Activated naive CD4-positive, alpha-beta T cell treated with anti-CD3 and anti-CD28 coated beads for 36 hours (primary cell): ENCODE measurements at regions of chr17 and their contacts with region 1.

Region 1: DNA sequence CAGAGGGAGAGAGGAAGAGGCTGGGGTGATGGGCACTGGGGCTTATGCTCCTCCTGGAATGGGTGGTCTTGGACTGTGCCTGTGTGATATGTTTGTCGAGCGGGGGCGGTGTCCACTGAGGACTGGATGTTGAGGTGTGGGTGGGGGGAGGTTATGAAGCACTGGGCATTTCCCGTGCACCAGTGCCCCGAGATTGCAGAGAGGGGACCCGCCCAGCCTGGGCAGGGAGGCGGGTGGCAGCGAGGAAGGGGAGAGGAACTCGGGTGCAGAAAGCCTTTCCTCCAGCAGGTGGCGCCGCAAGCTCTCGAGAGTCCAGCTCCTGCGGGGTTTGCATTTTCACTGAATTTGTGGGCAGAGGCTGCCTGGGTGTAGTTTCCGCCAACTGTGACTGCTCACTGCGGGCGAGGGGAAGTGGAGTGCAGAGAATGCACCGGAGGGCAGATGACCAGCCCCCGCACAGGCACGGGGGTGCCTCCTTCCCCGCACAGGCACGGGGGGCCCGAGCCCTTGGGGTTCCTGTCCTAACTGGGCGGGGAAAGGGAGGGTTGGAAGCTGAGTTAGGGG is 190.6 kb downstream of the SEC14L1 start:
- DNase-seq: peak; percentile 98
- H3K4me3 Mint-ChIP-seq: peak overlapping the region; percentile 70
- H3K27ac Mint-ChIP-seq: no peak overlapping the region
- H3K4me1 Mint-ChIP-seq: peaks cover 37% of the 10 kb centered on the region
- H3K27me3 Mint-ChIP-seq: no peaks in the 10 kb centered on the region

Region 2: GRCh38 chr17:76997981-76998531 is 333.3 kb before region 1 on chr17:
- CTCF ChIA-PET with region 1: no interaction called
- intact Hi-C with region 1: no loop called
- DNase-seq: peak; percentile 85
- H3K4me3 Mint-ChIP-seq: peak overlapping the region; percentile 45
- H3K27ac Mint-ChIP-seq: peak overlapping the region; percentile 78
- H3K4me1 Mint-ChIP-seq: peaks cover 55% of the 10 kb centered on the region
- H3K27me3 Mint-ChIP-seq: no peaks in the 10 kb centered on the region

Region 3: GRCh38 chr17:77345260-77345910 is 14.0 kb after region 1 on chr17:
- CTCF ChIA-PET with region 1: interaction called, 12 read pairs
- intact Hi-C with region 1: loop called (anchors 1 kb)
- DNase-seq: no peak
- H3K4me3 Mint-ChIP-seq: no peak overlapping the region
- H3K27ac Mint-ChIP-seq: no peak overlapping the region
- H3K4me1 Mint-ChIP-seq: peaks cover 41% of the 10 kb centered on the region
- H3K27me3 Mint-ChIP-seq: no peaks in the 10 kb centered on the region

Region 4: DNA sequence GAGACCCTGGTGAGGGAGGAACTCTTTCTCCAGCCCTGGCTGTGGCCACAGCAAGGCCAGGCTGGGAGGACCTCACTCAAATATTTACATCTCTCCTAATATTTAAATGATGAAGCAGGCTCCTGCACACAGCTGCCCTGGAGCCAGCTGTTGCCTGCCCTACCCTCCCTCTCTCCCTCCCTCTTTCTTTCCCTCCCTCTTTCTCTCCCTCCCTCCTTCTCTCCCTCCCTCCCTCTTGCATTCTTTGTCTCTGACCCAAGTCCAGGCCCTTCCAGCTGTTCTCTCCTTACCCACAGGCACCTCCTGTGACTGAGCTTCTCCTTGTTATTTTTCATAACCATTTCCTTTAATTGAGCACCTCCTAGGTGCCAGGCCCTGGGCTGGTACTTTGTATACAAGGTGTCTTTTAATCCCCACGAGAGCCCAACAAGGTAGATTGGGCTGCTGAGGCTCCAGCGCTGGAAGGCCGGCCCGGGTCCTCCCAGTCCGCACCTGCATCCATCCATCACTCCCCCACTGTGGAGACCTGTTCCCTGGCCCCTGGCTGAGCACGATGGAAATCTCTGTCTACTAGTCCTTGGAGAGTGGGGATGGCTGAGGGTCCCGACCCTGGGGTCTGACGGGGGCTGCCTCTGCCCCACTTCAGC is 51.7 kb after region 1 on chr17:
- CTCF ChIA-PET with region 1: interaction called, 6 read pairs
- intact Hi-C with region 1: loop called (anchors 2 kb)
- DNase-seq: no peak
- H3K4me3 Mint-ChIP-seq: no peak overlapping the region
- H3K27ac Mint-ChIP-seq: no peak overlapping the region
- H3K4me1 Mint-ChIP-seq: peaks cover 76% of the 10 kb centered on the region
- H3K27me3 Mint-ChIP-seq: no peaks in the 10 kb centered on the region

Region 5: GRCh38 chr17:77420804-77421629 is 89.6 kb after region 1 on chr17:
- CTCF ChIA-PET with region 1: interaction called, 10 read pairs
- intact Hi-C with region 1: no loop called
- DNase-seq: peak; percentile 75
- H3K4me3 Mint-ChIP-seq: peak overlapping the region; percentile 66
- H3K27ac Mint-ChIP-seq: peak overlapping the region; percentile 86
- H3K4me1 Mint-ChIP-seq: peaks cover 52% of the 10 kb centered on the region
- H3K27me3 Mint-ChIP-seq: no peaks in the 10 kb centered on the region

Region 6: DNA sequence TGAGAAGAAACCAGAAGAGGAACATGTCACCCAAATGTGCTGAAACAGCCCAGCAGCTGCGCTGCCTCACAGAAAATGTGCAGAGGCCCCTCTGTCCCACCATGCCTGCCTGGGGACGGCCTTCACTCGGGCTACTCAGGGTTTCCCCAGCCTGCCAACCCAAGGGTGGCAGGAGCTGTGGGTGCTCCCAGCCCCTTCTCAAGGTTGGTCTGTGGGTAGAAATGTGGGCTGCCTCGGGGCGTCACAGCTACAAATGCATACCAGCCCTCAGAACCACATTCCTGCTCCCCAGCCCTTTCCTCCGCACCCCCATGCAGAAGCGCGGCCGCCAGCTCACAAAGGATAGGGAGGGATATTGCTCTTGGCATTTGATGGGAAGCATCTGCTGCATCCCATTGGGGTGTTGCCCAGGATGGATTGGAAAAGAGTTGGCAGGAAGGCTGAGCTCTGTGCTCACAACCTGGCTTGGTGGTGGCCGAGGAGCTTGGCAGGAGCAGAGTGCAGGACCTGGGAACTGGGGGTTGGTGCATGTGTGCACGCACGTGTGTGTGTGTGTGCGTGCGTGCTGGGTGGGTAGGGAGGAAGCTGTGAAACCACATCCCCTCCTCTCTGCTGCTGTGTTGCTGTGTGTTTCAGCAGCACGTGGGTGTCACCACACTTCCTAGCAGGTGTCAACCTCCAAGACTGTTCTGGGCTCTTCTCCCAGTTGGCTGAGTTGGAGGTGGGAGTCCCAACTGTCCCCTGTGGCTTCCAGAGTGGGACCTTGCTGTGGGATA is 113.8 kb after region 1 on chr17:
- CTCF ChIA-PET with region 1: interaction called, 6 read pairs
- intact Hi-C with region 1: loop called (anchors 2 kb)
- DNase-seq: peak; percentile 87
- H3K4me3 Mint-ChIP-seq: peak overlapping the region; percentile 58
- H3K27ac Mint-ChIP-seq: peak overlapping the region; percentile 94
- H3K4me1 Mint-ChIP-seq: peaks cover 89% of the 10 kb centered on the region
- H3K27me3 Mint-ChIP-seq: no peaks in the 10 kb centered on the region

Region 7: DNA sequence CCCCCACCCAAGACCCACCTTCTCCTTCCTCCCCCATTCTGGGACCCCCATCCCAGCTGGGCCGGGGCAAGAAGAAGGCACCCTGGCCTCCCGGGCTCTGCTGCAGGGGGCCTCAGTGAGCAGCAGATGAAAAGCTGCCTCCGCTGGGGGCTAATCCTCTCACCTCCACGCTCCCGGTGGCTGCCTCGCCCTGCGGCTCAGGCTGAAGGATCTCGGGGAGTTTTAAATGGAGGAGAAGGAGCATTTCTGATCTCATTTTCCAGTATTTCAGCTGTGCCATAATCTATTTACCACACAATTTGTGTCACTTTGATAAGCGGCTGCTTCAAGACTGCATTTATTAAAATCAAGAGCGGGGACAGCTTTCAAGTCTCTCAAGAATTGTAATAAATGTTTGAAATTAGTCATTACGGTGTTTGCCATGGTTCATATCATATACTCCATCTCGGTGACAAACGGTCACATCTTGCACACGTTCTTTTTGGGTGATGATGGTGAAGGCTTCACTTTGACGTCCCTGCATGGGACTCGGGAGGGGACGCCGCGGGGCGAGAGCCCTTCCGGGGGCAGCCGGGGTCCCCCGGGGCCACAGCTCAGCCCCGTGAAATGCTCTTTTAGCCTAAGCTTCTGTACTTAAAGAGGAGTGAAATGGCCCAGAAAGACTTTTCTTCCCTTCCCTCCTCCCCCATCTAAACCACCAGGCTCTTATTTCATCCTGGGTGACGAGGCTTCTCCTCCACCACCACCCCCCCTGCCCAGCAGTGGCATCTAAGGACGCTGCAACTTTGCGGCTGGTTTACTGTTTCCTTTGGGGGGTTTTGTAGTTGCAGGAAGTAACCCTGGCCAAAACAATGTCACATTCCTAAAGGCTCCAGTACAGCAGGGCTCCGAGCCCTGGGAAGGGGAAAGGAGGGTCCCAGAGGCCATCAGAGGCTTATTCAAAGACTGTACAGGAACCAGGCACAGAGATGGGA is 314.0 kb after region 1 on chr17:
- CTCF ChIA-PET with region 1: no interaction called
- intact Hi-C with region 1: loop called (anchors 5 kb)
- DNase-seq: peak; percentile 80
- H3K4me3 Mint-ChIP-seq: peak overlapping the region; percentile 53
- H3K27ac Mint-ChIP-seq: peak overlapping the region; percentile 85
- H3K4me1 Mint-ChIP-seq: peaks cover 26% of the 10 kb centered on the region
- H3K27me3 Mint-ChIP-seq: no peaks in the 10 kb centered on the region